Keratinocyte (primary cell): ENCODE measurements at regions of chr3 and their contacts with region 1.

Region 1: GRCh38 chr3:192237992-192238608 is 489.2 kb downstream of the FGF12 start:
- DNase-seq: no peak
- H3K4me3 ChIP-seq: no peak overlapping the region
- H3K27ac ChIP-seq: no peak overlapping the region
- H3K4me1 ChIP-seq: no peaks in the 10 kb centered on the region
- H3K27me3 ChIP-seq: no peaks in the 10 kb centered on the region
- CTCF ChIP-seq: peak in 1 of 3 experiments; percentile 28

Region 2: DNA sequence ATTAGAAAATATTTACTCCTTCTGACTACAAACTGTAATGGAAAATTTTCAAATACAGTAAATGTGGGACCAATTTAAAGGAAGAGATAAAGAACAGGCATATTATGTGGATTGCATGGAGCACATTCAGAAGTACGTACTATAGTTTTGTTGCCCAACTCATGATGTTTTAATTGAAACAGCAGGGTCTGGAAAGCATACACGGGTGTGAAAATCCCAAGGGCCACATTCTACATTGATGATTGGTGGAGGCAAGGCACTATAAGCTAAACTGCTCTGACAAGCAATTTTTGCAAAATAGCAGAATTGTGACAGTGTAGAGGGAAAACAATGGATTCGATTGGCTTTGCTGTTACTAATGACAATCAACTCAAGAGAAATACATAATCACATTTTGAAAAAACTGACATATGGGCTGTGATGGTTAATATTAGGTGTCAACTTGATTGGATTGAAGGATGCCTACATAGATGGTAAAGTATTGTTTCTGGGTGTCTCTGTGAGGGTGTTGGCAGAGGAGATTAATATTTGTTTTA is 318.5 kb before region 1 on chr3:
- dilution Hi-C with region 1: no loop called
- DNase-seq: no peak
- H3K4me3 ChIP-seq: no peak overlapping the region
- H3K27ac ChIP-seq: no peak overlapping the region
- H3K4me1 ChIP-seq: no peaks in the 10 kb centered on the region
- H3K27me3 ChIP-seq: no peaks in the 10 kb centered on the region
- CTCF ChIP-seq: no peak

Region 3: DNA sequence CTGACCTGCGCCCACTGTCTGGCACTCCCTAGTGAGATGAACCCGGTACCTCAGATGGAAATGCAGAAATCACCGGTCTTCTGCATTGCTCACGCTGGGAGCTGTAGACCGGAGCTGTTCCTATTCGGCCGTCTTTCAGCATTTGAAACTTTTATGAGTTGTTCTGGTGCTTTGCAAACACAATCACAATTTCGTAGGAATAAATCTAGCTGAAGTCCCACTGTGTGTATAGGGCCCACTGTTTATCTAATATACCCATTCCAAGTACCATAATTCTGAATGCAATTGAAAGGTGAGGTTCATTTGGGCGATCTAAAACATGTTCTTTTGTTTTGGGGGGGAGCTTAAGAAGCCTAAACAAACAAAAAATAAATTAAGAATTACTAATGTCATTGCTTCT is 82.9 kb before region 1 on chr3:
- dilution Hi-C with region 1: no loop called
- DNase-seq: no peak
- H3K4me3 ChIP-seq: peak overlapping the region; percentile 29 to 59 (median 57)
- H3K27ac ChIP-seq: peak overlapping the region; percentile 66
- H3K4me1 ChIP-seq: no peaks in the 10 kb centered on the region
- H3K27me3 ChIP-seq: no peaks in the 10 kb centered on the region
- CTCF ChIP-seq: no peak

Region 4: DNA sequence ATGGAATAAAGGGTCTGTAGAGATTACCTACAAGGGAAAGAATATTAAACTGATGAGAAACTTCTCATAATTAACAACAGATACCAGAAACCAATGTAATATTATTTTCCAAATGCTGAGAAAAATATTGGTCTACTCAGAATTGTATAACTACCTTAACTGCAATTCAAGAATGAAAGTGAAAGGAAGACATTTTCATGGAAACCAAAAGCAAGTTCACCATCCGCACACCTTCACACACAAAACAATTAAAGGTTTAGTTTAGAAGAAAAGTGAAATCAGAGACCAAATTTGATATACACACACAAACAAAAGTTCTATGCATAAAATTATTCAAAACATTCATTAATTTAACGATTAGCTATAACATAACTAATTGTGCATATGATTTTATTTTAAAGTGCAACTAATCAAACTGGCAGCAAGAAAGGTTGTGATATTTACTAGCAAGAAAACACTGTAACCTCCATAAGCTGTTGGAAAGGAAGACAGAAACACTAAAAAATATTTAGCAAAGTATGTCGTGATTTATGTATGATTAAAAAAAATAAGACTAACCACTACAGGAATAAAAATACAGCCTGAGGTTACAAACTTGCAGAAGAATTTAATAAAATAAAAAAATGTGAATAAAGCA is 93.8 kb after region 1 on chr3:
- dilution Hi-C with region 1: loop called (anchors 25 kb)
- DNase-seq: no peak
- H3K4me3 ChIP-seq: no peak overlapping the region
- H3K27ac ChIP-seq: no peak overlapping the region
- H3K4me1 ChIP-seq: no peaks in the 10 kb centered on the region
- H3K27me3 ChIP-seq: no peaks in the 10 kb centered on the region
- CTCF ChIP-seq: no peak